Mammary epithelial cell (primary cell): ENCODE measurements at regions of chr12 and their contacts with region 1.

Region 1: DNA sequence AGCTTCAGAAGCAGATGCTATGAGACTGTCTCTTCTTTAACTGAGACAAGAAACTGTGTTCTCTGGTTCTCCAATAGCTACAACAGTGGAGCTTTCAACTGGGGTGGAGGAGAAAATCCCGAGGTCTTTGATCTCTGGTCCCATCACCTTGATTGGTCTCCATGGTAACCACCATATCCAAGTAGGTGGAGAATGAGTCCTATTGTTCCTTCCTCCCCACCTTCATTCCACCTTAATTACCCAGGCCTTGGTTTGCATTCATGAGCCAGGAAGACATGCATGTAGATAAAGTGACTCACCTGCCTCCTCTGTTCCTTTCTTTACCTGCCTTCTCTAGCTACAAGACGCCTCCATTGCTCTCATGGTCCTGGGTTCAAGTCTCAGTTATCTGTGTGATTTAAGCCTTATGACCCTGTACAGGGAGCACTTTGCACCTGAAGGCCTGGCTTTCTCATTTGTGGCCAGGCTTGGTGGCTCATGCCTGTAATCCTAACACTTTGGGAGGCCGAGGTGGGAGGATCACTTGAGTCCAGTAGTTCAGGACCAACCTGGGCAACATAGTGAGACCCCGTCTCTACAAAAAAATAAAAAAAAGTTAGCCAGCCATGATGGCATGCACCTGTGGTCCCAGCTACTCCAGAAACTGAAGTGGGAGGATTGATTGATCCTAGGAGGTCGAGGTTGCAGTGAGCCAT is 157.7 kb upstream of the TBX3 start:
- DNase-seq: peak; percentile 97
- H3K4me3 ChIP-seq: no peak overlapping the region
- H3K27ac ChIP-seq: peak overlapping the region; percentile 80
- H3K4me1 ChIP-seq: peaks cover 3% of the 10 kb centered on the region
- H3K27me3 ChIP-seq: no peaks in the 10 kb centered on the region
- CTCF ChIP-seq: no peak

Region 2: DNA sequence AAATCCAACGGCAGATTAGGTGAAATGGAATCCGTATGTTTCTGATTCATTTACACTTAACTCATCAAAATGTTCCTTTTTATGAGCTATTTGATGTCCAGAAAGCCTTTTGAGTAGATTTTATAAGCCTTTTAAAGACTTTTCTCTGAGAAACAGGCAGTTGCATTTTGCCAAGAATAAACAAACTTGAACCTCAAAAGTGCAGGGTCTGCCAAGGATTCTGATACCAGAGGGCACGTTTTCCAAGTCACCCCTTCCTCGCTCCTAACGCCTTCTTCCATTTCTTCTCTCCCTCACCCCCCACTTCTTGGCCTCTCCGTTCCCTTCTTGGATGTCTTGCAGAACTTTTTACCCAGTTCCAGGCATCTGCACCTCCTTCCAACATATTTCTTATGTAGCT is 42.9 kb after region 1 on chr12:
- CTCF ChIA-PET with region 1: no interaction called
- dilution Hi-C with region 1: loop called (anchors 5 kb)
- in situ Hi-C with region 1: no loop called
- intact Hi-C with region 1: no loop called
- DNase-seq: no peak
- H3K4me3 ChIP-seq: no peak overlapping the region
- H3K27ac ChIP-seq: no peak overlapping the region
- H3K4me1 ChIP-seq: no peaks in the 10 kb centered on the region
- H3K27me3 ChIP-seq: no peaks in the 10 kb centered on the region
- CTCF ChIP-seq: no peak